GM18951 (cell line): ENCODE measurements at regions of chr2 and their contacts with region 1.

Region 1: GRCh38 chr2:229800997-229801754 is 86.8 kb upstream of the DNER start:
- POLR2A ChIP-seq: no peak

Region 2: GRCh38 chr2:229901819-229902218 is 100.6 kb after region 1 on chr2:
- in situ Hi-C with region 1: loop called (anchors 10 kb)
- POLR2A ChIP-seq: no peak

Region 3: DNA sequence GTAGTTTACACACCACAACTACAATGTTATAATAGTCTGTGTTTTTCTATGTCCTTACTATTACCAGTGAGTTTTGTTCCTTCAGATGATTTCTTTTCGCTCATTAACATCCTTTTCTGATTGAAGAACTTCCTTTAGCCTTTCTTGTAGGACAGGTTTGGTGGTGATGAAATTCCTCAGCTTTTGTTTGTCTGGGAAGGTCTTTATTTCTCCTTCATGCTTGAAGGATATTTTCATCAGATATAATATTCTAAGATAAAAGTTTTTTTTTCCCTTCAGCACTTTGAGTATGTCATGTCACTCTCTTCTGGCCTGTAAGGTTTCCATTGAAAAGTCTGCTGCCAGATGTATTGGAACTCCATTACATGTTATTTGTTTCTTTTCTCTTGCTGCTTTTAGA is 305.6 kb after region 1 on chr2:
- in situ Hi-C with region 1: no loop called
- POLR2A ChIP-seq: no peak